ENCODE measurements at regions of chr2 and their contacts with region 1.

Region 1: GRCh38 chr2:231662028-231662810 is 46.1 kb upstream of the PTMA start:
- DNase-seq: peak; percentile 94 to 99 (median 96)
- ATAC-seq: peak; percentile 91
- H3K4me3 ChIP-seq: peak overlapping the region; percentile 60 to 82
- H3K4me3 Mint-ChIP-seq: peak overlapping the region; percentile 77
- H3K27ac ChIP-seq: peak overlapping the region; percentile 87 to 94
- H3K27ac Mint-ChIP-seq: peak overlapping the region; percentile 97
- H3K4me1 ChIP-seq: peaks cover 16% of the 10 kb centered on the region
- H3K4me1 Mint-ChIP-seq: peaks cover 14% of the 10 kb centered on the region
- H3K27me3 ChIP-seq: no peaks in the 10 kb centered on the region
- H3K27me3 Mint-ChIP-seq: no peaks in the 10 kb centered on the region
- CTCF ChIP-seq: no peak

Region 2: GRCh38 chr2:231463698-231464575 is 198.3 kb before region 1 on chr2 and contains the start of gene NCL:
- CTCF ChIA-PET with region 1: no interaction called
- POLR2A ChIA-PET with region 1: interaction called, 7 read pairs
- intact Hi-C with region 1: loop called in 1 of 2 experiments (anchors 1 kb)
- DNase-seq: peak; percentile 71 to 94 (median 82)
- ATAC-seq: peak; percentile 62
- H3K4me3 ChIP-seq: peak within 1 kb of the TSS; percentile 97
- H3K4me3 Mint-ChIP-seq: peak within 1 kb of the TSS; percentile 96
- H3K27ac ChIP-seq: peak within 1 kb of the TSS; percentile 97 to 98
- H3K27ac Mint-ChIP-seq: peak within 1 kb of the TSS; percentile 100
- H3K4me1 ChIP-seq: peaks cover 36% of the 10 kb centered on the region
- H3K4me1 Mint-ChIP-seq: peaks cover 52% of the 10 kb centered on the region
- H3K27me3 ChIP-seq: no peaks in the 10 kb centered on the region
- H3K27me3 Mint-ChIP-seq: no peaks in the 10 kb centered on the region
- CTCF ChIP-seq: no peak
- total RNA-seq, gene NCL: 390 to 394 TPM

Region 3: DNA sequence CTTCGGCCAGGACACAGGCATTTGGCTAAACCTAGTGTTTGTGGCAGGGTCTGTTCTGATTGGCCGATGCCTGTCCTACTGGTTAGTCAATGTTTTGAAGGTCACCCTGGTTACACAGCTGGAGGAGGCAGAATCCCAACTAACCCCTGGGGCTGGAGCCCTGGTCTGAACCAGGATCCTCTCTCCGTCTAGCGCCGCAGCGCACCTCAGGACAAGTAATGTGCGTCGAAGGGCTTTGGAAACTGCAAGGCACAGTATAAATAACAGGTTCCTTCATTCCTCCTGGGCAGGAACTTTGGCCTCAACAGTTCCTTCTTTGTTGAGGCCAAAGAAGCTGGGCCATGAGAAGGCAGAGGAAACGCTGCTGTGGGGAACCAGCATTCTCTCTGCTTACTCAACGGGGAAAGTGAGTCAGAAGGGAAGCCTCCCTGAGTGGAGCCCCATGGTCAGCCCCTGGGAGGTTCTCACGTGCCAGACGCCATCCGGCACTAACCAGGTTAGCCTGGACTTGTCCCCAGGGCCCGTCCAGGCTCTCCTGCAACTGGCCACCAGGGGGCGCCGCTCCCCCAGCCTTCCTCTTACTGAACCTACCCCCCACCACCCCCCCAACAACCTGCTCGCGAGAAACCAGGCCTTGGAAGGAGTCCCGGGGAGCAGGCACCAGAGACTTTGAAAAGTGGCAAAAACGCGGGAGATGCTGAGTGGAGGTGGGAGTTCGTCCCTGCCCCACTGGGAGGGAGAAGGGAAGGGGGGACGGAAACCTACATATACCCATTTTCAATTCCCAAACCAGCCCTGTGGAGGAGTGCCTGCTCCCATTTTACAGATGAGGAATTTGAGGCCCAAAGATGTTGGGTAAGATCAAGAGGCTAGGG is 49.8 kb before region 1 on chr2:
- CTCF ChIA-PET with region 1: interaction called, 4 read pairs
- POLR2A ChIA-PET with region 1: interaction called, 8 read pairs
- intact Hi-C with region 1: loop called (anchors 1 to 2 kb)
- DNase-seq: peak; percentile 73 to 92 (median 88)
- ATAC-seq: peak; percentile 78
- H3K4me3 ChIP-seq: peak overlapping the region in 1 of 2 experiments; percentile 55
- H3K4me3 Mint-ChIP-seq: peak overlapping the region; percentile 88
- H3K27ac ChIP-seq: peak overlapping the region in 1 of 2 experiments; percentile 17
- H3K27ac Mint-ChIP-seq: peak overlapping the region; percentile 42
- H3K4me1 ChIP-seq: peaks cover 16% of the 10 kb centered on the region
- H3K4me1 Mint-ChIP-seq: peaks cover 23% of the 10 kb centered on the region
- H3K27me3 ChIP-seq: peaks cover 0 to 5% of the 10 kb centered on the region in 2 experiments
- H3K27me3 Mint-ChIP-seq: no peaks in the 10 kb centered on the region
- CTCF ChIP-seq: peak; percentile 82